CD4-positive, alpha-beta T cell (primary cell): ENCODE measurements at regions of chr5 and their contacts with region 1.

Region 1: GRCh38 chr5:131209506-131210150 is 38.9 kb downstream of the LYRM7 start:
- DNase-seq: peak; percentile 7 to 91 (median 40)
- ATAC-seq: peak; percentile 93
- H3K4me3 ChIP-seq: peak overlapping the region; percentile 19
- H3K4me3 Mint-ChIP-seq: peak overlapping the region; percentile 77
- H3K27ac ChIP-seq: peak overlapping the region; percentile 69 to 79
- H3K27ac Mint-ChIP-seq: peak overlapping the region; percentile 96
- H3K4me1 ChIP-seq: peaks cover 25% of the 10 kb centered on the region
- H3K4me1 Mint-ChIP-seq: peaks cover 62% of the 10 kb centered on the region
- H3K27me3 ChIP-seq: no peaks in the 10 kb centered on the region
- H3K27me3 Mint-ChIP-seq: no peaks in the 10 kb centered on the region
- CTCF ChIP-seq: no peak

Region 2: DNA sequence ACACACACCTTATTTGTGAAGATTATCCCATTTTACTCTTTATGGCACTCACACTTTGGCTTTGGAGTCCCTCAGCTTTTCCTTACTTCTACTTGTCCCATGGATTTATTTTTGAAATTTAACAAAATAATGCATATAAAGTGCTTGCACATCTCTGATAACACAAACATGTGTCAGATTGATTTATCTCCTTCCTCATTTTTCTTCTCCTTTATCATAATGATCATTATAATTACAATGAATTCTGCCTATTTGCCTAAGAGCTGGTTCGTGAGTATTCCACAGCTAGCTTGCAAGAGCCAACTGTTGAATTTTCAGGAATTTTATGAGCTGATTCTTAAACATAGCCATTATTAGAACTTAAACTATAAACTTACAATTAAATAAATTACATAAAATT is 957.7 kb before region 1 on chr5:
- CTCF ChIA-PET with region 1: no interaction called
- POLR2A ChIA-PET with region 1: no interaction called
- intact Hi-C with region 1: no loop called
- DNase-seq: no peak
- ATAC-seq: no peak
- H3K4me3 ChIP-seq: no peak overlapping the region
- H3K4me3 Mint-ChIP-seq: no peak overlapping the region
- H3K27ac ChIP-seq: no peak overlapping the region
- H3K27ac Mint-ChIP-seq: no peak overlapping the region
- H3K4me1 ChIP-seq: no peaks in the 10 kb centered on the region
- H3K4me1 Mint-ChIP-seq: no peaks in the 10 kb centered on the region
- H3K27me3 ChIP-seq: no peaks in the 10 kb centered on the region
- H3K27me3 Mint-ChIP-seq: peaks cover 4% of the 10 kb centered on the region
- CTCF ChIP-seq: no peak

Region 3: GRCh38 chr5:131170540-131171275 is 38.9 kb before region 1 on chr5 and contains the start of gene LYRM7:
- CTCF ChIA-PET with region 1: no interaction called
- POLR2A ChIA-PET with region 1: interaction called, 9 read pairs
- intact Hi-C with region 1: loop called in 1 of 2 experiments (anchors 1 kb)
- DNase-seq: peak; percentile 88 to 99 (median 92)
- ATAC-seq: peak; percentile 94
- H3K4me3 ChIP-seq: peak within 1 kb of the TSS; percentile 73
- H3K4me3 Mint-ChIP-seq: peak within 1 kb of the TSS; percentile 98
- H3K27ac ChIP-seq: peak within 1 kb of the TSS; percentile 70 to 74
- H3K27ac Mint-ChIP-seq: peak within 1 kb of the TSS; percentile 94
- H3K4me1 ChIP-seq: peaks cover 16% of the 10 kb centered on the region
- H3K4me1 Mint-ChIP-seq: peaks cover 55% of the 10 kb centered on the region
- H3K27me3 ChIP-seq: no peaks in the 10 kb centered on the region
- H3K27me3 Mint-ChIP-seq: no peaks in the 10 kb centered on the region
- CTCF ChIP-seq: no peak
- total RNA-seq, gene LYRM7: 8.3 to 11.9 TPM

Region 4: DNA sequence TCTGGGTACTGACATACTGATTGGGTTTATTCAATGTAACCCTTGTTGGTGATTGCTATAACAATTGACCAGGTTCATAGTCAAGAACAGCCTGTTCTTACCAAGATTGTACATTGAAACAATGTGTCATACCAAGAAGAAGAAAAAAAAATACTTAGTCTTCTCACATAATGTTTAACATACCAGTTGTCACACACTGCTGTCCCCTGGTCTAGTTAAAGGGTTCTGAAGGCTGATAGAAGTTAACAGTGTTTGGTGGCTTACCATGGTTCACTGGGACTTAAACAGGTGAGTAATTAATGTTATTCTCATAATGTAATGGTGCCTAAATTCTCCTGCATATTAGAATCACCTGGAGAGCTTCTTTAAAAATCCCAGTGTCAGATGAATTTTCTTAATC is 35.7 kb after region 1 on chr5:
- CTCF ChIA-PET with region 1: no interaction called
- POLR2A ChIA-PET with region 1: interaction called, 23 read pairs
- intact Hi-C with region 1: loop called in 1 of 2 experiments (anchors 5 kb)
- DNase-seq: no peak
- ATAC-seq: no peak
- H3K4me3 ChIP-seq: no peak overlapping the region
- H3K4me3 Mint-ChIP-seq: no peak overlapping the region
- H3K27ac ChIP-seq: no peak overlapping the region
- H3K27ac Mint-ChIP-seq: no peak overlapping the region
- H3K4me1 ChIP-seq: peaks cover 7% of the 10 kb centered on the region
- H3K4me1 Mint-ChIP-seq: peaks cover 18% of the 10 kb centered on the region
- H3K27me3 ChIP-seq: no peaks in the 10 kb centered on the region
- H3K27me3 Mint-ChIP-seq: no peaks in the 10 kb centered on the region
- CTCF ChIP-seq: no peak

Region 5: DNA sequence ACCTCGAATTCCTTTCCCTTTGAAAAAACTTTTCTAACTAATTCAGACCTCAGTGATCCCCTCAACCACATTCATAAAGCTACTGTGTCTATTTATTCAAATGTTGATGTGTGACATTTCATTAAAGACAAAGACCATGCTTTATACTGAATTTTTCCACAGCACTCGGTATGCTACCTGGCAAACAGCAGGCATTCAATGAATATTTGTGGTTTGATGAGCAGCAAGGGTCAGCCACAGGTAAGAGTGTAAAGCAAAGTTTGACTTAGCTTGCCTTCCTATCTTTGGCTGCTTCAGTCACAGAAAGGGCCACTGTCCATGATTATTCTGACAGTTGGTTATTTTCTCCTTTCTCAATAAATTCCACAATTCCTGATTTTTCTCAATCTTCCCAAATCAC is 49.1 kb after region 1 on chr5:
- CTCF ChIA-PET with region 1: no interaction called
- POLR2A ChIA-PET with region 1: interaction called, 54 read pairs
- intact Hi-C with region 1: loop called in 1 of 2 experiments (anchors 2 kb)
- DNase-seq: no peak
- ATAC-seq: no peak
- H3K4me3 ChIP-seq: no peak overlapping the region
- H3K4me3 Mint-ChIP-seq: peak overlapping the region; percentile 70
- H3K27ac ChIP-seq: peak overlapping the region; percentile 58 to 66
- H3K27ac Mint-ChIP-seq: peak overlapping the region; percentile 90
- H3K4me1 ChIP-seq: peaks cover 57% of the 10 kb centered on the region
- H3K4me1 Mint-ChIP-seq: peaks cover 73% of the 10 kb centered on the region
- H3K27me3 ChIP-seq: no peaks in the 10 kb centered on the region
- H3K27me3 Mint-ChIP-seq: no peaks in the 10 kb centered on the region
- CTCF ChIP-seq: no peak